Activated B cell treated with CpG ODN at 0.5 μM for 24 hours (primary cell): ENCODE measurements at regions of chr10 and their contacts with region 1.

Region 1: DNA sequence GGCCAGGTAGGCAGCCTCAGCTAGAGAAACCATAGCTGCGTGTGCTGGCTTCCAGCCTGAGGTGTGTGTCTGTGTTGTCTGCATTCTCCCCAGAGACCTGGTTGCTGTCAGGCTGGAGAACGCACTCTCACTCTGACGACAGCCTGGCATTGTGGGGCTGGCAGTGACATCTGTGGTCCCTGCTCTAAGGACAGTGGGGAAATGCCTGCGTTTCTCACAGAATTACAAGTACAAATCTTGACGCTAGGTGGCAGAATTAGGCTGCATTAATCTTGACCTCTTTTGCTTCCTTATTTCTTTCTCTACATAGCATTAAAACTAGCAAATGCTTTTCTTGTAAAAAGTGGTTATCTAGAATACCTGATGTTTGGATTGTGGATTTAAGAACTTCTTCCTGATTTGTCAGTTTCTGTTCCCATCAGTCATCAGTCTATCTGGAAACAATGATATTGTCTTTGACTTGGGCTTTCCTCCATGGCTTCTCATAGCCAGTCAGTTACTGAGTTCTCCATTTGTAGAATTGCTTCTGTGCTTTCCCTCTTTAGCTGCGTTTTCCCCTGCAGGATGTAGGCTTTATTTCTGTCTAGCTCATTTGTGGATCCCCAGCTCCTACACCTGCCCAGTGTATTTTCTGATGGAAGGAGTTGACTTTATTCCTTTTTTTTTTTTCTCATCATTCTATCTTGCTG is 86.0 kb downstream of the FANK1 start:
- DNase-seq: peak; percentile 31
- ATAC-seq: peak; percentile 85
- H3K4me3 Mint-ChIP-seq: no peak overlapping the region
- H3K27ac Mint-ChIP-seq: peak overlapping the region; percentile 64
- H3K4me1 Mint-ChIP-seq: peaks cover 37% of the 10 kb centered on the region
- H3K27me3 Mint-ChIP-seq: peaks cover 5% of the 10 kb centered on the region
- CTCF ChIP-seq: no peak

Region 2: DNA sequence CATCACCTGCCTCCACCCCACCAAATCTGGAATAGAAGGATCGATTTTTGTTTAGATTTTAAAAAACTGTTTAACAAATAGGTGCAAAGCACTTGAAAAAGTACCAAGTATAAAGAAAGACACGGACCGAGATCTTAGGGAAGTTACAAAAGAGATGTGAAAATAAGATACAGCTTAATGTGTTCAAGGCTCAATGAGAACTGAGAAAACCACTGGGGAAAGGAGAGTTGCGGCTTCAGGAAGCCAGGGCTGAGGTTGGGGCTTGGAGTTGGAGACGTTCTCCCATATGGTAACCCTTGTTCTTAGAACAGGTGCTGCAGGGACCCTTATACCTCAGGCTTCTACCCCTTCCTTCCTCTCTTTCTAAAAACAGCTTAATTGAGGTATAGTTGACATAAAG is 54.1 kb after region 1 on chr10:
- CTCF ChIA-PET with region 1: interaction called, 7 read pairs
- POLR2A ChIA-PET with region 1: interaction called, 8 read pairs
- intact Hi-C with region 1: loop called (anchors 1 kb)
- DNase-seq: no peak
- ATAC-seq: peak; percentile 60
- H3K4me3 Mint-ChIP-seq: peak overlapping the region; percentile 47
- H3K27ac Mint-ChIP-seq: peak overlapping the region; percentile 100
- H3K4me1 Mint-ChIP-seq: peaks cover 60% of the 10 kb centered on the region
- H3K27me3 Mint-ChIP-seq: no peaks in the 10 kb centered on the region
- CTCF ChIP-seq: no peak

Region 3: GRCh38 chr10:126179637-126180036 is 197.2 kb after region 1 on chr10:
- CTCF ChIA-PET with region 1: no interaction called
- POLR2A ChIA-PET with region 1: no interaction called
- intact Hi-C with region 1: loop called (anchors 10 kb)
- DNase-seq: no peak
- ATAC-seq: peak; percentile 86
- H3K4me3 Mint-ChIP-seq: peak overlapping the region; percentile 41
- H3K27ac Mint-ChIP-seq: peak overlapping the region; percentile 50
- H3K4me1 Mint-ChIP-seq: peaks cover 18% of the 10 kb centered on the region
- H3K27me3 Mint-ChIP-seq: peaks cover 2% of the 10 kb centered on the region
- CTCF ChIP-seq: no peak

Region 4: DNA sequence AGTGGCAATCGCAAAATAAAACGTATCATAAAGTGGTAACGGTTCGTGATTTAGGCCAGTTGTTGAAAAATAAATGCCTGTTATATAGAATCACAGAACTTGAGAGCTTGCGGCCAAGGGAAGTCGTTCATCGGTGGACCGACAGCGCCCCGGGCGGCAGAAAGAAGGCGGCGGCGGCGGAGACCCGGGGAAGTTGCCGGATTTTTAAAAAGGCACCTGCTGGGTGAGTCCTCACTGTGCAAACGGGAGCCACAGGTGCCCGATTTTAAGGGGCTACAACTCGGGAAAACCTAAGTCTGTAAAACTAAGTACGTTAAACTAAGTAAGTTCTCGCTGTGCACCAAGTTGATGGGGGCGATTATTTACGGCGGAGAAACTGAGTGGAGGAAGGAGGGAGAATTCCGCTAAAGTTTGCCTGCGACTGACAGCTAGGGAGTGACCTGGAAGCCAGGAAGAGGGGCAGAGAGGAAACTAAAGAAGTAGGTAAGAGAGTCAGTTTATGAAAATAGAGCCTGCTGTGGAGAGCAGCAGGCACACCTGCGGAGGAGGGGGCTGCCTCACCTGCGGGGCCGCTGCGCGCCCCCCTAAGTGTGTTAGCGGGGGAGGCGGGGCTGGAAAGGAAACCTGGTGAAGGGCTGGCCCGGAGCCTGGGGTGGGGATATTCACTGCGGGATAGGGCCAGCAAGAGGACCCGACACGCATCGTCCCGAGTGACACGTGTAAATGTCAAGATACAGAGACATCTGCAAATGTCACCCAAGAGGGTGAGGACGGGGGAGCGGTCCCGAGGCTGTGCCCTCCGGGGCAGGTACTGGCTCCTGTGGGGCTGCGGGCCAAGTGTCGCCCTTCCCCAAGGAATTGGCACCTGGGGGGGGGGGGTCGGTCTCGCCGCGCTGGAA is 404.9 kb after region 1 on chr10:
- CTCF ChIA-PET with region 1: interaction called, 3 read pairs
- POLR2A ChIA-PET with region 1: no interaction called
- intact Hi-C with region 1: loop called (anchors 1 kb)
- DNase-seq: peak; percentile 25
- ATAC-seq: no peak
- H3K4me3 Mint-ChIP-seq: peak overlapping the region; percentile 59
- H3K27ac Mint-ChIP-seq: no peak overlapping the region
- H3K4me1 Mint-ChIP-seq: peaks cover 5% of the 10 kb centered on the region
- H3K27me3 Mint-ChIP-seq: peaks cover 35% of the 10 kb centered on the region
- CTCF ChIP-seq: no peak

Region 5: DNA sequence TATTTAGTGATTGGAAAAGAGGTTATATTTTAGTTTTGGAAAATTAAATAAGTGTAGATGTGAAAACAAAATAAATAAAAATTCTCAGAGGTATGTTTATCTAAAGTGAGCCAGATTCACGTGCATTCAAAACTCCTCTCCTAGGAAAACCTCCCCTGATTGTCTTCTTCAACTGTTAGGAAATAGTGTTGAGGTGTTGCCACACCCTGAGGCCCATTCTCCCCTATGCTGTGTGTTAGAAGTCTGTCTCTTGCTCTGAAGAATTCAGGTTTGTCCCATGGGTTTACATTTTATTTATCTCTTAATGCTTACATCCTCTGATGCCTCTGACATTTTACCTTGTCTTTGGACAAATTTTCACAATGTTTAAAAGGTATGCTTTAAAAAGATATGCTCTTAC is 1964.8 kb after region 1 on chr10:
- CTCF ChIA-PET with region 1: no interaction called
- POLR2A ChIA-PET with region 1: no interaction called
- intact Hi-C with region 1: no loop called
- DNase-seq: no peak
- ATAC-seq: no peak
- H3K4me3 Mint-ChIP-seq: no peak overlapping the region
- H3K27ac Mint-ChIP-seq: no peak overlapping the region
- H3K4me1 Mint-ChIP-seq: peaks cover 9% of the 10 kb centered on the region
- H3K27me3 Mint-ChIP-seq: peaks cover 7% of the 10 kb centered on the region
- CTCF ChIP-seq: no peak